Kidney (tissue), 22 donors: ENCODE measurements at regions of chr10 and their contacts with region 1.

Region 1: DNA sequence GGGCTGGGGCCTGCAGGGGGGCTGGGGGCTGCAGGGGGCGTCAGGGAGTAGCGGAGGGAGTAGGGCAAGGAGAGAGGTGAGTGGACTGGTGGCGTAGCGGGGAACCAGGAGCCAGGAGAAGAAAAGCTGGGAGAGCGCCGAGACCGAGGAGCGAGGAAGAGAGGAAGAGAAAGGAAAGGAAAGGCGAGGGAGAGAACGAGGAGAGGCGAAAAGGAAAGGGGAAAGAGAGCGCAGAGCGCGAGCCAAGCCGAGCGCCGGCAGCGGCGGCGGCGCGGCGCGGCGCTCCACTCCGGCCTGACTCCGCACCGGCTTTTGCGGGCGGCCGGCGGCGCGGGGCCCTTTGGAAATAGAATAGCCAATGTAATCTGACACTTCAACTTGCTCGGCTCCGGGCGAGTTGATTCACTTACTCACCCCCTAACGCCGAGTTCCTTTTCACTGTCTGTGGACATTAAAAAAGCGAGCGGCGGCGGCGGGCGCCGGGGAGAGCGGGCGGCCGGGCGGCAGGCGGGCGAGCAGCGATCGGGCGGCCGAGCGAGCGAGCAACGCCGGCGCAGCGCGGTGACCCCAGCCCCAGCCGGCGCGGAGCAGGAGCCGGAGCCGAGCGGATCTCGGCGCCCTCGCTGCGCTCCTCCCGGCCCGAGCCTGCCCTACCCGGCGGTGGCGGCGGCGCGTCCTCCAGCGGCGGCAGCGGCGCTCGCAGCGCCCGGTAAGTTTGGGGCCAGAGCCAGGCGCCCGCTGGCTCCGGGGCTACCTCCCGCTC is at the start of gene ZMIZ1:
- DNase-seq: peak; percentile 93 to 97 (median 96)
- H3K4me3 ChIP-seq: peak within 1 kb of the TSS; percentile 76 to 90 (median 83)
- H3K27ac ChIP-seq: peak within 1 kb of the TSS; percentile 90 to 92
- H3K4me1 ChIP-seq: peaks cover 2 to 25% (median 19%) of the 10 kb centered on the region in 3 donors
- H3K27me3 ChIP-seq: no peaks in the 10 kb centered on the region
- CTCF ChIP-seq: peak; percentile 12
- total RNA-seq, gene ZMIZ1: 97.6 TPM

Region 2: DNA sequence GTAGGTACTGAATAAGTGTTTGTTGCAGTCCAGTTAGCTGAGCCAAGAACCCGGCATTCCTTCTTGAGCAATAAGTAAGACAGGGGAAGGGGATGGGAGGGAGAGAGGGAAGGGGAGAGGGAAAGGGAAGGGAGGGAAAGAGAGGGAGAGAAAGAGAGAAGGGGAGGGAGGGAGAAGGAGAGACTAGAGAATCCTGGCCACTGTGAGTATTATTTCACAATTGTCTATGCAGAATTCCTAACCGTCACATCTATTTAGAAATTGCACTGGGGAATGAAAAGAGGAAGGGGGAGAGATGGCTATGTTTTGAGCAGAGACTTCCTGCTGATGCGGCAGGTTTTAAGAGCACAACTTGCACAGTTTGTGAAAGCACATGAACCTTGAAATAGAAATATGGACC is 251.4 kb before region 1 on chr10:
- intact Hi-C with region 1: no loop called
- DNase-seq: peak in 1 of 5 donors; percentile 62
- H3K4me3 ChIP-seq: no peak overlapping the region
- H3K27ac ChIP-seq: no peak overlapping the region
- H3K4me1 ChIP-seq: peaks cover 0 to 3% (median 0%) of the 10 kb centered on the region in 3 donors
- H3K27me3 ChIP-seq: no peaks in the 10 kb centered on the region
- CTCF ChIP-seq: no peak

Region 3: DNA sequence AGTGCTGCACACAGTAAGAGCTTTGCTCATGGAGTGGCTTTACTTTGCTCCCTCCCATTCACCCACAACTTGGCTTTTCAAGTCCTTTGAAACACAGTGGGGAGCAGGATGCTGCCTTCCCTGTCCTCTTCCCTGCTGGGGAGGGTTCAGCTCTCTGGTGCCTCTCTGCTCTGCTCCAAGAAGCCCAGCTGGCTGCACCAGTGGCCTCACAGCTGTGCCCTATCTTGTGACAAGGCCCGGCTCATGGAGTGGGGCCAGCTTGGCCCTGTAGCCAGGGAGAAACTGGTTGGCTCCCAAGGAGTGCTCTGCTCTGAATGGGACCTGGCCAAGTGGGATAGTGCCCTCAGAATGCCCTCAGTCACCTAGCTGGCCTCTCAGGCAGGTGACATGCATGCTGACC is 212.3 kb before region 1 on chr10:
- intact Hi-C with region 1: no loop called
- DNase-seq: peak in 4 of 5 donors; percentile 62 to 85 (median 70)
- H3K4me3 ChIP-seq: no peak overlapping the region
- H3K27ac ChIP-seq: no peak overlapping the region
- H3K4me1 ChIP-seq: no peaks in the 10 kb centered on the region
- H3K27me3 ChIP-seq: no peaks in the 10 kb centered on the region
- CTCF ChIP-seq: no peak

Region 4: DNA sequence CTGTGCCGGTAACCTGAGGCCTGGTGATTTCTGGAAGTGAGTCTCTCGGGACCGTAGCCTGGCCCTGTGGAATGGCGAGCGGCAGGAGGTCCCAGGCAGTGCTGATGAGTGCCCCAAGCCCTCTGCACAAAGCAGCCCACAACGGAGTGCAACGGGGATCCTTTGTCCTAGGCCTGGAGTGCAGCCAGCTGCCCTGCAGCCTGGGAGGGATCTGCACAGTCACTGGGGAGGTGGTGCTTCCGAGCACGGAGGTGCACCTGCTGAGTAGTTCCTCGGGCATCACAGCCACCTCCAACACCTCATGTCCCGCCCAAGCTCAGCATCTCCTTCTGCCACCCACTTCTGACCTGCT is 162.8 kb before region 1 on chr10:
- intact Hi-C with region 1: no loop called
- DNase-seq: peak in 2 of 5 donors; percentile 10 to 46
- H3K4me3 ChIP-seq: no peak overlapping the region
- H3K27ac ChIP-seq: no peak overlapping the region
- H3K4me1 ChIP-seq: peaks cover 0 to 4% (median 4%) of the 10 kb centered on the region in 3 donors
- H3K27me3 ChIP-seq: no peaks in the 10 kb centered on the region
- CTCF ChIP-seq: no peak

Region 5: DNA sequence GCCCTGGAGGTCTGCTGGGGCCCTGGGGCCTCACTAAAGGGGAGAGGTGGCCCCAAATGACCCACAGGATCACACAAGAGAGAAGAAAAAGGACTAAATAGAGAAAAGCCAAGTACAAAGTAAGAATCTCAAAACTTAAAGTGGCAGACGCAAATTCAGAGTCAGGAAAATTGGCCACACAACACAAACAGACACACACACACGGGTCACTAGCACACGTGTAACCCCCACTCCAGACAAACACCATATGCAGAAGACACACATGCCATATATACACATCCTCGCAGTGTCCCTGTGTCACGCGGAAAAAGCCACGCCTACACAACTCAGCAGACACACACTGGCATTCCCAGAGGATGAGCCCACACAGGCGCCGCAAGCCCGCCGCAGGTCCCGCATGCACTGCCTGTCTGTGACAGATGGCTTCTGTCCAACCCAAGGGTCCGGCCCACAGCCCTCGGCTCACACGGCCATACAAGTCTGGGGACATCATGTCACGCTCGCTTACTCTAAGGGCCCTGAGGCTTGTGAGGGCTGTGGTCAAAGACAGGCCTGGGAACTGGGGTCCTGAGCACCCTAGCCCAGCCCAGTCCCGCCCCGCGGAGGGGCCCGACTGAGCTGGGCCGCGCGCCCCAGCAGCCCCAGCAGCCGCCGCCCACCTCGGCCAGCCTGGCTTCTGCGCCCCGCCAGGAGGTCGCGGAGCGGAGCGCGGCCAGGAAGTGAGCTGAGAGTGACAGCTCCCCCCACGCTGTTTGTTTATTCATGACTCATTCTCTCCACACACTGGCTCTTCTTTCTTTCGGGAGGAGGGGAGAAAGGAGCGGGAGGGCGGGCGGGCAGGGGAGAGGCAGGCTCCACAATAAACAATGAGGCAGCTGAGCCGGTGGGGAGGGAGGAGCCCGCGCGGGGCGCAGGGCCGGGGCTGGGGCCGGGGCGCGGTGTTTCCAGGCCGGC is 95.5 kb before region 1 on chr10:
- intact Hi-C with region 1: loop called (anchors 10 kb)
- DNase-seq: peak; percentile 93 to 97 (median 94)
- H3K4me3 ChIP-seq: peak overlapping the region; percentile 15 to 58 (median 53)
- H3K27ac ChIP-seq: peak overlapping the region; percentile 94 to 96
- H3K4me1 ChIP-seq: peaks cover 3 to 25% (median 22%) of the 10 kb centered on the region in 3 donors
- H3K27me3 ChIP-seq: no peaks in the 10 kb centered on the region
- CTCF ChIP-seq: no peak

Region 6: DNA sequence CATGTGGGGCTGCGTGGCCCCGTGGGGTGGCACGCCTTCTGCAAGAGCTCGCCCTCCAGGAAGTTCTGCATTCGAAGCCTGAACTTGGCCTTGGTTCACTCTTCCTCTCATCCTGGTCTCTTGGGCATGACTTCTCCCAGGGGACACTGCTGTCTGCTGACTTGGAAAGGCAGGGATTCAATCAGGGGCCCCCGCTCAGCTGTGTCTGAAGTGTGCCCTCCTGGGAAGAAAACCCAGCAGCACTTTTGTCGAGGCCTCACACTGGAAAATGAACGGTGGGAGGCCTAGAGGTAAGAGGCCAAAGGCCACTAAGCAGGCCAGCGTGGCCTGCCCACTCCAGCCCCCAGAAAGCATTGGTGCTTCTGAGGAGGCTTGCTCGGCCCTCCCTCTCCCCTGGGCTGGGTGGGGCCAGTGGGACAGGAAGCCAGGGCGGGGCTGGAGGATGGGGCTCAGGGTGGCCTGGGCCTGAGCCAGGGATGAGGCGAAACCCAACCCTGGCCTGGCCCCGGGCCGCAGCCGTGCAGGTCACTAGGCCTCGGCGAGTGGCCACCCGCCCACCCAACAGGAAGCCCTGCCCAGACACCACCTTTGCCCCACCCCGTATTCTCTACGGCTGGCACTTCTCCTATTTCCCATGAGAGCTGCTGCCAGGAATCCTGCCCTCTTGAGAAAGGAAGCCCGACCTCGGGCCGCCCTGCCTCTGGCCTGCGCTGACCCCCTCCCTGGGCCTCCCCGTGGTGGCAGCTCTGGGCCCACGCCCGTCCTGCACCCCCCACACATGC is 81.1 kb after region 1 on chr10:
- intact Hi-C with region 1: loop called (anchors 10 kb)
- DNase-seq: peak in 3 of 5 donors; percentile 54 to 96 (median 70)
- H3K4me3 ChIP-seq: peak overlapping the region in 1 of 3 donors; percentile 10
- H3K27ac ChIP-seq: peak overlapping the region; percentile 95 to 98
- H3K4me1 ChIP-seq: peaks cover 0 to 84% (median 60%) of the 10 kb centered on the region in 3 donors
- H3K27me3 ChIP-seq: no peaks in the 10 kb centered on the region
- CTCF ChIP-seq: no peak

Region 7: GRCh38 chr10:79195091-79195923 is 126.6 kb after region 1 on chr10:
- intact Hi-C with region 1: loop called (anchors 10 kb)
- DNase-seq: peak; percentile 91 to 94 (median 92)
- H3K4me3 ChIP-seq: peak overlapping the region in 1 of 3 donors; percentile 22
- H3K27ac ChIP-seq: peak overlapping the region; percentile 73 to 80
- H3K4me1 ChIP-seq: peaks cover 0 to 32% (median 14%) of the 10 kb centered on the region in 3 donors
- H3K27me3 ChIP-seq: no peaks in the 10 kb centered on the region
- CTCF ChIP-seq: peak; percentile 97